ENCODE measurements at regions of chr4 and their contacts with region 1.

Region 1: GRCh38 chr4:129362674-129363274 is 266.8 kb downstream of the C4orf33 start:
- DNase-seq: peak; percentile 63 to 91
- H3K4me3 ChIP-seq: no peak overlapping the region
- H3K27ac ChIP-seq: no peak overlapping the region
- H3K4me1 ChIP-seq: peaks cover 0 to 13% (median 4%) of the 10 kb centered on the region in 4 donors
- H3K27me3 ChIP-seq: no peaks in the 10 kb centered on the region
- CTCF ChIP-seq: peak in 5 of 7 experiments; percentile 48 to 72 (median 59)
- EP300 ChIP-seq: no peak
- POLR2A ChIP-seq: no peak

Region 2: GRCh38 chr4:129641179-129641578 is 278.4 kb after region 1 on chr4:
- intact Hi-C with region 1: loop called (anchors 10 kb)
- DNase-seq: peak; percentile 53 to 66
- H3K4me3 ChIP-seq: no peak overlapping the region
- H3K27ac ChIP-seq: no peak overlapping the region
- H3K4me1 ChIP-seq: no peaks in the 10 kb centered on the region
- H3K27me3 ChIP-seq: no peaks in the 10 kb centered on the region
- CTCF ChIP-seq: peak in 5 of 7 experiments; percentile 42 to 82 (median 68)
- EP300 ChIP-seq: no peak
- POLR2A ChIP-seq: no peak

Measured in stomach (tissue), 19 donors.